ENCODE measurements at regions of chr11 and their contacts with region 1.

Region 1: GRCh38 chr11:124837491-124837856 is 27.8 kb upstream of the ROBO3 start:
- DNase-seq: peak in 1 of 2 experiments; percentile 52
- H3K4me3 ChIP-seq: no peak overlapping the region
- H3K27ac ChIP-seq: no peak overlapping the region
- H3K4me1 ChIP-seq: peaks cover 0 to 11% (median 3%) of the 10 kb centered on the region in 4 experiments; a peak in 6 of 7 replicates
- H3K27me3 ChIP-seq: peaks cover 46 to 58% (median 53%) of the 10 kb centered on the region in 4 experiments
- CTCF ChIP-seq: peak in 2 of 3 experiments; percentile 71 to 74; a peak in 3 of 4 replicates
- EP300 ChIP-seq: no peak
- POLR2A ChIP-seq: no peak
- RAD21 ChIP-seq: peak; percentile 58 to 69

Region 2: DNA sequence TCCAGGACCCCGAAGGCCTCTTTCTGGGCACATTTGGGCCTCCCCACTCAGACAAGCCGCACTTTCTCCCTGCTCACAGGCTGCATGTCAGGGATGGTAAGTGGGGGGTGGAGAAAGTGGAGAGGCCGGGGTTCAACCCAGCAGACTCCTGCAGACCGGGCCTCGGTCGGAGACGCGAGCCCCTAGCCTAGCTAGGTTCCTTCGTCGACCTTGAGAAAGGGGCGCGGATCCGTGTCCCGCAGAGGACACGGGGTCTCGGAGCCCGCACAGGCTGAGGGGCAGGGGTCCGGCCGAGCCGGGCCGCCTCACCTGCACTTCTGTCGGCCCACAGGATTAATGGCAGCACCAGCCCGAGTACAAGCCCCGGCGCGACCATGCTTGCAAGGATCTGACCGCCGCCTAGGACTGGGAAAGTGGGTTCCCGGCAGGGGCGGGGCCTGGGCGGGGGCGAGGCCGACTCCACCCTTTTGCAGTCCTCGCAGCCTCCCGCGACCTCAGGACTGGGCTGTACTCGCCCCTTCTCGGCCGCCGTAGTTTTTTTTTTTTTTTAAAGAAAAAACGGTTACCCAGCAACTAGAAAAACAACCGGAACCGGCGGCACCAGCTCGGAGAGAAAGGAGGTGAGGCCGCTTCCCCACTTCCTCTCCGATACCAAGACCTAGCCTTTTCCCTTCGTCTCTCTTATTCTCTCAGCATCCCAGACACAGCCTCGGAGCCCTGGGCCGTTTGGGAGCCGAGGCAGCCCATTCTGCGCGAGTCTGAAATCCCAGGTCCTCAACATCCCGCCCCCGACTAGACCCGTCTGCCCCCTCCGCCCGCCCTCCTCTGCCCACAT is 163.9 kb before region 1 on chr11 and contains the starts of genes SIAE and SPA17:
- CTCF ChIA-PET with region 1: interaction called, 54 read pairs
- POLR2A ChIA-PET with region 1: interaction called, 3 read pairs
- DNase-seq: peak; percentile 86 to 96
- H3K4me3 ChIP-seq: peak within 1 kb of the TSS; percentile 71 to 90 (median 79)
- H3K27ac ChIP-seq: no peak within 1 kb of the TSS
- H3K4me1 ChIP-seq: no peaks in the 10 kb centered on the region; a peak in 1 of 7 replicates
- H3K27me3 ChIP-seq: peaks cover 0 to 15% (median 5%) of the 10 kb centered on the region in 4 experiments; a peak in 6 of 7 replicates
- CTCF ChIP-seq: no peak
- EP300 ChIP-seq: peak in 1 of 2 experiments; percentile 82; a peak in 1 of 3 replicates
- POLR2A ChIP-seq: peak in 1 of 2 experiments; percentile 80; a peak in 2 of 3 replicates
- RAD21 ChIP-seq: no peak
- total RNA-seq, gene SIAE: 1.7 and 2.3 TPM in 2 replicates
- total RNA-seq, gene SPA17: 4.2 and 5.2 TPM in 2 replicates

Region 3: GRCh38 chr11:124800226-124800929 is 37.1 kb before region 1 on chr11 and contains the start of gene MSANTD2:
- CTCF ChIA-PET with region 1: interaction called, 108 read pairs
- POLR2A ChIA-PET with region 1: interaction called, 5 read pairs
- DNase-seq: peak; percentile 29 to 90
- H3K4me3 ChIP-seq: peak within 1 kb of the TSS; percentile 70 to 86 (median 74)
- H3K27ac ChIP-seq: peak within 1 kb of the TSS; percentile 96
- H3K4me1 ChIP-seq: peaks cover 0 to 6% (median under 1%) of the 10 kb centered on the region in 4 experiments; a peak in 3 of 7 replicates
- H3K27me3 ChIP-seq: no peaks in the 10 kb centered on the region
- CTCF ChIP-seq: no peak
- EP300 ChIP-seq: no peak
- POLR2A ChIP-seq: peak; percentile 97 to 98
- RAD21 ChIP-seq: no peak
- total RNA-seq, gene MSANTD2: 15.9 and 17.3 TPM in 2 replicates

Region 4: DNA sequence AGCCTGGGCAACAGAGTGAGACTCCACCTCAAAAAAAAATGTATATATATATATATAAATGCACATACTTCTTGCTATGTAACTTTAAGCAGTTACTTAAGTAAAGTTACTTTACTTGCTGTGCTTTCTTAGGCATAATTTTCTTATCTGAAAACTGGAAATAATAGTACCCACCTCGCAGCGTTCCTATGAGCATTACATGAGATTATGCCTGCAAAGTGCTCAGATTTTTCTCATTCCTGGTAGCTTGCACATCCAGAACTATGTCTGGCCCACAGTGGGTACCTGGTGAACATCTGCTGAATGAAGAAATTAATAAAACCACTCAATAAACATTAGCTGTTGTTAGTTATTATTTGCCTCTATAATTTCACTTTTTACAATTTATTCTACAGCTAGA is 21.7 kb after region 1 on chr11:
- CTCF ChIA-PET with region 1: interaction called, 13 read pairs
- POLR2A ChIA-PET with region 1: no interaction called
- DNase-seq: no peak
- H3K4me3 ChIP-seq: no peak overlapping the region
- H3K27ac ChIP-seq: no peak overlapping the region
- H3K4me1 ChIP-seq: peaks cover 0 to 5% (median 0%) of the 10 kb centered on the region in 4 experiments; a peak in 2 of 7 replicates
- H3K27me3 ChIP-seq: peaks cover 36 to 61% (median 45%) of the 10 kb centered on the region in 4 experiments
- CTCF ChIP-seq: no peak
- EP300 ChIP-seq: no peak
- POLR2A ChIP-seq: no peak
- RAD21 ChIP-seq: no peak

Measured in H1 (cell line).